ENCODE measurements at regions of chr2 and their contacts with region 1.

Region 1: DNA sequence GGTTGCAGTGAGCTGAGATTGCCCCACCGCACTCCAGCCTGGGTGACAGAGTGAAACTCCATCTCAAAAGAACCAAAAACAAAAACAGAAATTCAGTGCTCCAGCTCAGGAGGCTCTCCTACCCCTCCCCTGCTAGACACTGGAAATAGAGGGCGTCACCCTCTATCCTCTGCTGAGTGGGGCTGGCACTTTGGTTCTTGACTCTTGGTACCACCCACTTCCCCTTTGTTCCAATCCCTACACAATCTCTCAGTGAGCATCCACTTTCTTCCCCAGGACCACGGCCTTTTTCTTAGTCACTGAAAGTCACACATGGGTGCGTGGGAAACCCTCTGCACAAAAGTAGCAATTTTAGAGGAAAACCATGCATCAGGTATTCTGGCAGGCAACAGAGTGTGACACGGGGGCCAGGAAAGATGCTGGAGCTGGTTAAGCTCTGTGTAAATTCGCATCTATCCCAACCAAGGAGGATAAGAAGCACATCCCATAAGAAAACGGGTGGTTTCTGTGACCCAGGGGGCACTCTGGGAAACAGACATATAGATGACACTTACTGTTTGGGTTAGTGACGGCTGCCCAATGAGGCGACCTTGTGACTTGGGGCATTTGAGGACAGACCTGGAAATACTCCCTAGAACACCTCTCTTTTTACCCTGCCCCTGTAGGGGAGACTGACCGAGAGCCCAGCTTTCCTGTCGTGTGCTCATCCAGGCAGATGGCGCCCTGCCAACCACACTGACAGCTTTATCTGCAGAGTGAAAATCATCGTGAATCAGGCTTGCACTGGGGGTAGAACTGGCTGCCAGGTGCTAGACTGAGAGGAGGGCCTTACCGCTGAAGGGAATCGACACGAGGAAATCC is 7.7 kb downstream of the HJURP start:
- DNase-seq: no peak
- H3K4me3 ChIP-seq: no peak overlapping the region
- H3K4me3 Mint-ChIP-seq: no peak overlapping the region
- H3K27ac ChIP-seq: no peak overlapping the region
- H3K27ac Mint-ChIP-seq: peak overlapping the region in 1 of 8 donors; percentile 29
- H3K4me1 ChIP-seq: no peaks in the 10 kb centered on the region
- H3K4me1 Mint-ChIP-seq: peaks cover 0 to 2% (median 0%) of the 10 kb centered on the region in 3 donors
- H3K27me3 ChIP-seq: no peaks in the 10 kb centered on the region
- H3K27me3 Mint-ChIP-seq: peaks cover under 1 to 1% of the 10 kb centered on the region in 2 donors

Region 2: GRCh38 chr2:233857511-233858141 is 11.0 kb after region 1 on chr2:
- CTCF ChIA-PET with region 1: interaction called, 12 read pairs
- POLR2A ChIA-PET with region 1: no interaction called
- DNase-seq: peak; percentile 24 to 62 (median 33)
- H3K4me3 ChIP-seq: no peak overlapping the region
- H3K4me3 Mint-ChIP-seq: peak overlapping the region in 2 of 7 donors; percentile 11 to 82
- H3K27ac ChIP-seq: no peak overlapping the region
- H3K27ac Mint-ChIP-seq: no peak overlapping the region
- H3K4me1 ChIP-seq: peaks cover 13% of the 10 kb centered on the region
- H3K4me1 Mint-ChIP-seq: peaks cover 18 to 37% (median 33%) of the 10 kb centered on the region in 3 donors
- H3K27me3 ChIP-seq: no peaks in the 10 kb centered on the region
- H3K27me3 Mint-ChIP-seq: peaks cover 7 to 10% of the 10 kb centered on the region in 2 donors

Region 3: GRCh38 chr2:233867993-233868532 is 21.4 kb after region 1 on chr2 and contains the start of gene MSL3B:
- CTCF ChIA-PET with region 1: no interaction called
- POLR2A ChIA-PET with region 1: no interaction called
- DNase-seq: peak; percentile 44 to 73 (median 57)
- H3K4me3 ChIP-seq: peak within 1 kb of the TSS; percentile 72
- H3K4me3 Mint-ChIP-seq: peak within 1 kb of the TSS; percentile 84 to 91 (median 87)
- H3K27ac ChIP-seq: peak within 1 kb of the TSS; percentile 51
- H3K27ac Mint-ChIP-seq: peak within 1 kb of the TSS in 6 of 8 donors; percentile 36 to 87 (median 76)
- H3K4me1 ChIP-seq: no peaks in the 10 kb centered on the region
- H3K4me1 Mint-ChIP-seq: peaks cover 7 to 18% (median 12%) of the 10 kb centered on the region in 3 donors
- H3K27me3 ChIP-seq: peaks cover 4% of the 10 kb centered on the region
- H3K27me3 Mint-ChIP-seq: peaks cover 19 to 33% of the 10 kb centered on the region in 2 donors

Region 4: GRCh38 chr2:234308813-234309195 is 462.2 kb after region 1 on chr2:
- CTCF ChIA-PET with region 1: no interaction called
- POLR2A ChIA-PET with region 1: no interaction called
- DNase-seq: peak; percentile 35 to 80 (median 72)
- H3K4me3 ChIP-seq: no peak overlapping the region
- H3K4me3 Mint-ChIP-seq: peak overlapping the region in 6 of 7 donors; percentile 11 to 48 (median 36)
- H3K27ac ChIP-seq: peak overlapping the region; percentile 25
- H3K27ac Mint-ChIP-seq: peak overlapping the region; percentile 66 to 99 (median 90)
- H3K4me1 ChIP-seq: peaks cover 33% of the 10 kb centered on the region
- H3K4me1 Mint-ChIP-seq: peaks cover 34 to 60% (median 43%) of the 10 kb centered on the region in 3 donors
- H3K27me3 ChIP-seq: no peaks in the 10 kb centered on the region
- H3K27me3 Mint-ChIP-seq: no peaks in the 10 kb centered on the region

Measured in CD8-positive, alpha-beta memory T cell (primary cell).